ENCODE measurements at regions of chr4 and their contacts with region 1.

Region 1: DNA sequence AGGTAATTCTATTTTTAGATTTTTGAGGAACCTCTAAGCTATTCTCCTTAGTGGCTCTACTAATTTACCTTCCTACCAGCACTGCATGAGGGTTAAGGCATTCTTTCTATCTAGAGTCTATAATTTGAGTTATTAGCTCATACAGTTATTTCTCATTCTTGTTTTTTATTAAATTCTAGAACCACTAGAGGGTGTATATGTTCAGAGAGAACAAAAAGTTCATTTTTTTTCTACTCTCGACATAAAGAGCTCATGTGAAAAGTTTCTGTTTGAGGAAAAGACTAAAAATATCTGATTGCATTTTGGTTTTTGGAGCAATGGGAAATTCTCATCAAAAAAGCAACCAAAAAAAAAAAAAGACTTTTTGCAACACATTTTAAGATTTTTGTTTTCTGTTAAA is 57.0 kb upstream of the LRAT start:
- DNase-seq: peak; percentile 6
- H3K4me3 Mint-ChIP-seq: no peak overlapping the region
- H3K27ac Mint-ChIP-seq: no peak overlapping the region
- H3K4me1 Mint-ChIP-seq: peaks cover 5% of the 10 kb centered on the region
- H3K27me3 Mint-ChIP-seq: no peaks in the 10 kb centered on the region
- CTCF ChIP-seq: peak; percentile 38

Region 2: GRCh38 chr4:154642373-154643009 is 44.3 kb before region 1 on chr4:
- CTCF ChIA-PET with region 1: interaction called, 58 read pairs
- POLR2A ChIA-PET with region 1: no interaction called
- intact Hi-C with region 1: no loop called
- DNase-seq: no peak
- H3K4me3 Mint-ChIP-seq: no peak overlapping the region
- H3K27ac Mint-ChIP-seq: no peak overlapping the region
- H3K4me1 Mint-ChIP-seq: peaks cover 14% of the 10 kb centered on the region
- H3K27me3 Mint-ChIP-seq: no peaks in the 10 kb centered on the region
- CTCF ChIP-seq: no peak

Region 3: DNA sequence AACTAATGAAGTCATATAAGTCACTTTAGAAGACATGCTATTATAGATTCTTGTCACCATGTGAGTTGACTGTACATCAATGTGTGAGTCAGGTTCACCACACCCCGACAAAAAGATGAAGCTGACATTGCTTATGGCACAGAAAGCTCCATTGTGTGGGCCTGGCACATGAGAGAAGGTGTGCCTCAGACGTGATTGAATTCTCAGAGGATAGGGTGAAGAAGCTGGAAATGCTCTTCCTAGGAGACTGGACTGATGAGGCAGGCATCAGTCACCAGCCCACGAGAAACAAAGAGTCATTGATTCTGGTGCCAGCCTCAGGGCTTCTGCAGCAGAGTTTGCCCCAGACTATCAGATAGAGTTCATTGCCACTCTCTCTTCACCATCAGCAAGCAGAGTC is 21.0 kb after region 1 on chr4:
- CTCF ChIA-PET with region 1: interaction called, 11 read pairs
- POLR2A ChIA-PET with region 1: interaction called, 4 read pairs
- intact Hi-C with region 1: no loop called
- DNase-seq: peak; percentile 13
- H3K4me3 Mint-ChIP-seq: no peak overlapping the region
- H3K27ac Mint-ChIP-seq: no peak overlapping the region
- H3K4me1 Mint-ChIP-seq: peaks cover 6% of the 10 kb centered on the region
- H3K27me3 Mint-ChIP-seq: no peaks in the 10 kb centered on the region
- CTCF ChIP-seq: no peak

Region 4: DNA sequence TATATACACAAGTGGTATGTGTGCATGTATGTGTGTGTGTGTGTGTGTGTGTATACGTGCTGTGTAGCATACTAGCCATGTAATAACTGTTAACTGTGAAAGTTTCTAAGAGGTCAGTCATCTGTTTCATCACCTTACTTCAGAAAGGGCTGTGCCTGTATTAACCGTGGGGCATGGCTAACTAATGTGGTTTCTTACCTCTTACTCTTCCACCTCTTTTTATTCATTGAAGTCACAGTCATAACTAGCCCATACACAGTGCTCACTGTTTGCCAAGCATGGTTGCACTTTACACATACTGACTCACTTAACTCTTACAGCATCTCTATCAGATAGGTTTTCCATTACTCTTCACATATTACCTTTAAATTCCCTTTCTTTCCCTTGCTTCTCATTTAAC is 33.3 kb after region 1 on chr4:
- CTCF ChIA-PET with region 1: interaction called, 10 read pairs
- POLR2A ChIA-PET with region 1: no interaction called
- intact Hi-C with region 1: no loop called
- DNase-seq: peak; percentile 72
- H3K4me3 Mint-ChIP-seq: no peak overlapping the region
- H3K27ac Mint-ChIP-seq: peak overlapping the region; percentile 93
- H3K4me1 Mint-ChIP-seq: peaks cover 33% of the 10 kb centered on the region
- H3K27me3 Mint-ChIP-seq: no peaks in the 10 kb centered on the region
- CTCF ChIP-seq: no peak

Region 5: DNA sequence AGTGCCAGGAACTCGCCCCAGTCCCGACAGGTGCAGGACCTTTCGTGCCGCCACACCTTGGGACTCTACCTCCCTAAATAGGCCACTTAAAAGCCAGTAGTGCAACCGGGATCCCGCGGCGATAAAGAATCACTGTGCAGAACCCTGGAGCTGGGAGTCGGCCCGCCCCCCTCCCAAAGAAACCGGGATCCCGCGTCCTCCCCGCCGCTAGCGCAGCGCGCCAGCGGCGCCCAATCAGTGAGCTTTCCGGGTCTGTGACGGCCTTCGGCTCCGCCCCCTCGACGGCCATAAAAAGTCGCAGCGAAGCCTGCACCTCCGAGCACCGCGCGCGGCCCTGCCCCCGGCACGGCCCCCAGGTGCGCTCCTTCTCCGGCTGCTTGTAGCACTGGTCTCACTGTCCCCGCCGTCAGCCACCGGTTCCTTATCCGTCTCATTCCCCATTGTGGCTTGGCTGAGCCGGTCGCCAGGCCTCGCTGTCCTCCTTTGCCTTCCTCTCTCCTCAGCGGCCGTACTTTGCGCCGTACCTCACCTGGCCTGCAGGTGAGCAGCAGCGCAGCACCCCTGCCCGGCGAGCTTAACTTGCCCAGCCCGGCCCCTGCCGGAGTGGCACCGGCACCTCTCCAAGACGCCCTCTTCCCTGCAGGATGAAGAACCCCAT is 57.0 kb after region 1 on chr4 and contains the start of gene LRAT:
- CTCF ChIA-PET with region 1: interaction called, 40 read pairs
- POLR2A ChIA-PET with region 1: interaction called, 13 read pairs
- intact Hi-C with region 1: no loop called
- DNase-seq: peak; percentile 77
- H3K4me3 Mint-ChIP-seq: peak within 1 kb of the TSS; percentile 98
- H3K27ac Mint-ChIP-seq: peak within 1 kb of the TSS; percentile 88
- H3K4me1 Mint-ChIP-seq: peaks cover 36% of the 10 kb centered on the region
- H3K27me3 Mint-ChIP-seq: no peaks in the 10 kb centered on the region
- CTCF ChIP-seq: peak; percentile 19
- total RNA-seq, gene LRAT: 3.5 and 5.8 TPM in 2 replicates

Region 6: GRCh38 chr4:154779362-154779947 is 92.6 kb after region 1 on chr4:
- CTCF ChIA-PET with region 1: interaction called, 117 read pairs
- POLR2A ChIA-PET with region 1: interaction called, 8 read pairs
- intact Hi-C with region 1: loop called (anchors 1 kb)
- DNase-seq: peak; percentile 57
- H3K4me3 Mint-ChIP-seq: no peak overlapping the region
- H3K27ac Mint-ChIP-seq: no peak overlapping the region
- H3K4me1 Mint-ChIP-seq: no peaks in the 10 kb centered on the region
- H3K27me3 Mint-ChIP-seq: no peaks in the 10 kb centered on the region
- CTCF ChIP-seq: peak; percentile 67